ENCODE measurements at regions of chr14 and their contacts with region 1.

Region 1: GRCh38 chr14:21510735-21511657 is at the start of gene METTL3:
- DNase-seq: peak; percentile 96
- ATAC-seq: peak; percentile 99
- H3K4me3 Mint-ChIP-seq: peak within 1 kb of the TSS; percentile 97
- H3K27ac Mint-ChIP-seq: peak within 1 kb of the TSS; percentile 96
- H3K4me1 Mint-ChIP-seq: peaks cover 42% of the 10 kb centered on the region
- H3K27me3 Mint-ChIP-seq: no peaks in the 10 kb centered on the region
- total RNA-seq, gene METTL3: 64.0 to 67.4 TPM

Region 2: GRCh38 chr14:20989572-20990551 is 521.1 kb before region 1 on chr14 and contains the start of gene METTL17:
- CTCF ChIA-PET with region 1: no interaction called
- POLR2A ChIA-PET with region 1: no interaction called
- intact Hi-C with region 1: loop called in 1 of 2 experiments (anchors 1 kb)
- DNase-seq: peak; percentile 93
- ATAC-seq: peak; percentile 97
- H3K4me3 Mint-ChIP-seq: peak within 1 kb of the TSS; percentile 92
- H3K27ac Mint-ChIP-seq: peak within 1 kb of the TSS; percentile 89
- H3K4me1 Mint-ChIP-seq: peaks cover 37% of the 10 kb centered on the region
- H3K27me3 Mint-ChIP-seq: no peaks in the 10 kb centered on the region
- total RNA-seq, gene METTL17: 89.3 to 90.0 TPM

Region 3: DNA sequence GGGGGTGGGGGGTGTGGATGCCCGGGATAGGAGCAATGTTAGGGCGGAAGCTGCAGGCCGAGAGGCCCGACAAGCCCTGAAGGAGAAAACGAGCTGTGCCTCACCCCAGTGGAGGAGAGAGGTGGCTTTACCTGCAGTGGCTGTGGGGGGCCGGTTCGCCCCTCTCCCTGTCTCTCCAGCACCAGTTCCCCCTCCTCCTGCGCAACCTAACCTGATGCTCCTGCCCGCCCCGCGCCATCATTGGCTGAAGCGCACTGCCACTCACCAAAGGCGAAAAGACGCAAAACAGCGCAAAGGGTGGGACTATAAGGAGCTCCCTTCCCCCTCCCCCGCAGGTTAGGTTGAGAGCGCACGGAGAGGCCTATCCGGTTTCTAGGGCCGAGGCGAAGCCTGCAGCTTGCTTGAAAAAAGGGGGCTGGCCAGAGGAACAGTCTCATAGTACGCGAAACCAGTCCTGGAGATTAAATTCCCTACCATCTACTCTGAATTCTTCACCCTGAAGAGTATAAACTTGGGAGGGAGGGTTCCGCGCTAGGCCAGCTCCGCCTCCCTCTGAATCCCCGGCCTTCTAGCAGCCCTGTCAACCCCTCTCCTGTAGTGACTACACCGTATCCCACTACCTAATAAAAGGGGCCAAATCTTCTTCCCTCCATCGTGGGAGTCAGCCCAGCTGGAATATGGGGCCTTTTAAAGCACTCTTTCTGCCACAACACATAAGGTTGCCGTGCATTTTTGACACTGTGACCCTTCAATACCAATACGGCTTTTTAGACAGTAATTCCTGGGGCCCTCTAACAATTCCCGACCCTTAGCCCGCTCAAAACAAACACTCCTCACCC is 73.7 kb before region 1 on chr14:
- CTCF ChIA-PET with region 1: no interaction called
- POLR2A ChIA-PET with region 1: interaction called, 7 read pairs
- intact Hi-C with region 1: loop called in 1 of 2 experiments (anchors 1 kb)
- DNase-seq: peak; percentile 99
- ATAC-seq: peak; percentile 99
- H3K4me3 Mint-ChIP-seq: peak overlapping the region; percentile 95
- H3K27ac Mint-ChIP-seq: peak overlapping the region; percentile 87
- H3K4me1 Mint-ChIP-seq: peaks cover 57% of the 10 kb centered on the region
- H3K27me3 Mint-ChIP-seq: no peaks in the 10 kb centered on the region

Region 4: GRCh38 chr14:21498553-21499526 is 12.2 kb before region 1 on chr14:
- CTCF ChIA-PET with region 1: interaction called, 67 read pairs
- POLR2A ChIA-PET with region 1: interaction called, 5 read pairs
- intact Hi-C with region 1: no loop called
- DNase-seq: peak; percentile 22
- ATAC-seq: peak; percentile 78
- H3K4me3 Mint-ChIP-seq: no peak overlapping the region
- H3K27ac Mint-ChIP-seq: peak overlapping the region; percentile 64
- H3K4me1 Mint-ChIP-seq: peaks cover 23% of the 10 kb centered on the region
- H3K27me3 Mint-ChIP-seq: no peaks in the 10 kb centered on the region

Region 5: GRCh38 chr14:21525962-21526671 is 15.1 kb after region 1 on chr14 and contains the start of gene SALL2:
- CTCF ChIA-PET with region 1: interaction called, 11 read pairs
- POLR2A ChIA-PET with region 1: interaction called, 12 read pairs
- intact Hi-C with region 1: loop called (anchors 1 to 2 kb)
- DNase-seq: peak; percentile 87
- ATAC-seq: peak; percentile 87
- H3K4me3 Mint-ChIP-seq: peak within 1 kb of the TSS; percentile 71
- H3K27ac Mint-ChIP-seq: peak within 1 kb of the TSS; percentile 72
- H3K4me1 Mint-ChIP-seq: peaks cover 16% of the 10 kb centered on the region
- H3K27me3 Mint-ChIP-seq: no peaks in the 10 kb centered on the region
- total RNA-seq, gene SALL2: 5.5 to 6.3 TPM

Region 6: DNA sequence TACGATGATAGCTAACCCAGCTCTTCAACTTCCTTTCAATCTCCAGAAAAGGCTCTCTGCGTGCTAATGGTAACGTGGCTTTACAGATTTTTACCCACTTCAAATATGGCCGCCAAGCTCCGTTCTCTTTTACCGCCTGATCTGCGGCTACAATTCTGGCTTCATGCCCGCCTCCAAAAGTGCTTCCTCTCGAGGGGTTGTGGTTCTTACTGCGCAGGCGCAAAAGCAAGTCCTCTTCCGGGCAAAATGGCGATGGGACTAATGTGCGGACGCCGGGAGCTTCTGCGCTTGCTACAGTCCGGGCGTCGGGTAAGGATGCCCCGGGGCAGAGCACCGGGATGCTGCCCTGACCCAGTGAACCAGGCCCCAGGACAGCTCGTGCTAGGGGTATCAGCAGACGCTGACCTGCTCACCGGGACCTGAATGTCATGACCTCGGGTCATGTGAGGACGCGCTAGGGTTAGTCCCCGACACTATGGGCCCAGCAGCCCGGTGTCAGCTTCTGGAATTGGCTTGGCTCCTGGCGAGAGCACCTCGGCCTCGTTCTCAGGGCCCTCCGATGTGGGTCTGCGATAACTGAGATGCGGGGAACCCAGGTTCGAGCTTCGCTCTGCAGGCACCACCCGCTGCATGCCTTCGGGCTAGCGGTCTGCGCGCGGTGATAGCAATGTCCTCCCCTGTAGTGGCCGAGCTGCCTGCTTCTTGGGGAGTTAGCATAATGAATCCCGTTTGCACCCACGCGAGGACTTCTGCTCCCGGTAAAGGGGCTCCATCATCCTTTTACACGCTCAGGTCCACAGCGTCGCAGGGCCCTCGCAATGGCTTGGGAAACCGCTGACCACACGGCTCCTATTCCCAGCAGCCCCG is 1255.7 kb after region 1 on chr14 and contains the start of gene OXA1L:
- CTCF ChIA-PET with region 1: no interaction called
- POLR2A ChIA-PET with region 1: no interaction called
- intact Hi-C with region 1: loop called in 1 of 2 experiments (anchors 5 kb)
- DNase-seq: peak; percentile 98
- ATAC-seq: peak; percentile 87
- H3K4me3 Mint-ChIP-seq: peak within 1 kb of the TSS; percentile 90
- H3K27ac Mint-ChIP-seq: peak within 1 kb of the TSS; percentile 99
- H3K4me1 Mint-ChIP-seq: peaks cover 32% of the 10 kb centered on the region
- H3K27me3 Mint-ChIP-seq: no peaks in the 10 kb centered on the region
- total RNA-seq, gene OXA1L: 136 to 148 TPM